Caco-2 (cell line): ENCODE measurements at regions of chr6 and their contacts with region 1.

Region 1: DNA sequence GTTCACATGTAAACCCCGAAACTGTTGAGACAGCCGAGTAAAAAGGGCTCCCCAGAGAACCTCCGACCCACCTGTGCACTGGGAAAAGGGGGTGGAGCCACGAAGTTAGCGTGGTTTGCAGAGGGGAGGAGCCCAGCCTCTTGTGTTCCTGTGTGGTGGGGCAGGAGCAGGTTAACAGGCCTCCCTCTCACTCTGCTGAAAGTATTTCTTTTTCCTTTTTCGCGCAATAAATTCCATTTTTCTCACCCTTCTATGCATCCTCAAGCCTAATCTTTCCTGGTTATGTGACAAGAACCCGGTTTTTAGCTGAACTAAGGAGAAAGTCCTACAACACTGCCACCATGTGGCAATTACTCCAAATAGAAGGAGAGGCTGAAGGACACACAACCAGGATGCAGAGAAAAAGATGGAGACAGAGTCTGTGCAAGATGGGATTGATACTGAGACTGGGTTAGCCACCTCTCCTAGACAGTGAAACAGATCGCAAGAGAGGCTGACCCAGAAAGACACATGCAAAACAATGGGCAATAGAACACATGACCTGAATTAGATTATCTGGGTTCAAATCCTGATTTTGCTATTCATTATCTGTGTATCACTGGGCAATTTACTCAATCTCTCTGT is 168.7 kb upstream of the PRSS16 start:
- DNase-seq: peak; percentile 60 to 69
- H3K4me3 ChIP-seq: peak overlapping the region; percentile 50
- H3K4me3 Mint-ChIP-seq: peak overlapping the region; percentile 77
- H3K27ac Mint-ChIP-seq: no peak overlapping the region
- H3K4me1 ChIP-seq: peaks cover 16% of the 10 kb centered on the region
- H3K4me1 Mint-ChIP-seq: peaks cover 30% of the 10 kb centered on the region
- H3K27me3 ChIP-seq: no peaks in the 10 kb centered on the region
- H3K27me3 Mint-ChIP-seq: no peaks in the 10 kb centered on the region
- CTCF ChIP-seq: peak; percentile 67 to 82

Region 2: GRCh38 chr6:26607434-26608230 is 471.2 kb before region 1 on chr6:
- CTCF ChIA-PET with region 1: no interaction called
- POLR2A ChIA-PET with region 1: no interaction called
- intact Hi-C with region 1: loop called (anchors 1 kb)
- DNase-seq: peak; percentile 55 to 71
- H3K4me3 ChIP-seq: no peak overlapping the region
- H3K4me3 Mint-ChIP-seq: no peak overlapping the region
- H3K27ac Mint-ChIP-seq: no peak overlapping the region
- H3K4me1 ChIP-seq: no peaks in the 10 kb centered on the region
- H3K4me1 Mint-ChIP-seq: no peaks in the 10 kb centered on the region
- H3K27me3 ChIP-seq: no peaks in the 10 kb centered on the region
- H3K27me3 Mint-ChIP-seq: no peaks in the 10 kb centered on the region
- CTCF ChIP-seq: peak; percentile 71 to 86

Region 3: DNA sequence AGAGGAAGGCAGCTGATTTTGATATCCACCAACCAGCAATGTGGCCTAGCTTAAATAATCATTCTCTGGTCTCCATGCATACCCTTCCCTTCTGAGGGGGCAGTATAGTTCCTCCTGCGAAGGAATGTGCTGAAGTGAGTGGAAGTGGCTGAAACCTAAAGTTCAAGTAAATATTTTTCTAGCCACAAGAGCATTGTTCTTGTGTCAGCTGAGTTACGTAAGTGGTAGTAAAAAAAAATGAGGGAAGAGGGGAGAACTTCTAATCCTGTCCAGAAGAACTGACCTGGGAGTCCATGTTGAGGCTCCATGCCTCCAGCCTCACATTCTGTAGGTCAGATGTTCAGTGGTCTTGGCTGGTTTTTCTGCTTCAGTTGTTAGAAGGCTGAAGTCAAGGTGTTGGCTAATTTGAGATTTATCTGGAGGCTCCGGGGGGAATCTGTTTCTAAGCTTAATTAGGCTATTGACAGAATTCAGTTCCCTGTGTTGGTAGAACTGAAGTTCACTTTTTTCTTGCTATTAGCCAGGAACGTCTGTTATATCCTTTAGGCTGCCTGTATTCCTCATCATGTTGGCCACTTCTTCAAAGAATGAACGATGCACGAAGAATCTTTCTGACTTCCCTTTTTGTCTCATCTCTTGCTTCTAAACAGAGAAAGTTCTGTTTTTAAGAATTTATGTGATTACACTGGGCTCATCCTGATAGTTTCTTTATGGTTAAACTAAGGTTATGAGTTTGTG is 38.4 kb before region 1 on chr6:
- CTCF ChIA-PET with region 1: no interaction called
- POLR2A ChIA-PET with region 1: no interaction called
- intact Hi-C with region 1: loop called (anchors 5 kb)
- DNase-seq: peak in 1 of 2 experiments; percentile 43
- H3K4me3 ChIP-seq: no peak overlapping the region
- H3K4me3 Mint-ChIP-seq: peak overlapping the region; percentile 39
- H3K27ac Mint-ChIP-seq: peak overlapping the region; percentile 16
- H3K4me1 ChIP-seq: peaks cover 10% of the 10 kb centered on the region; the same call in 1 of the 2 replicates
- H3K4me1 Mint-ChIP-seq: peaks cover 7% of the 10 kb centered on the region
- H3K27me3 ChIP-seq: no peaks in the 10 kb centered on the region
- H3K27me3 Mint-ChIP-seq: no peaks in the 10 kb centered on the region
- CTCF ChIP-seq: peak in 1 of 2 experiments; percentile 16

Region 4: GRCh38 chr6:27066802-27067201 is 12.0 kb before region 1 on chr6:
- CTCF ChIA-PET with region 1: no interaction called
- POLR2A ChIA-PET with region 1: no interaction called
- intact Hi-C with region 1: no loop called
- DNase-seq: no peak
- H3K4me3 ChIP-seq: no peak overlapping the region
- H3K4me3 Mint-ChIP-seq: no peak overlapping the region
- H3K27ac Mint-ChIP-seq: no peak overlapping the region
- H3K4me1 ChIP-seq: no peaks in the 10 kb centered on the region
- H3K4me1 Mint-ChIP-seq: peaks cover 7% of the 10 kb centered on the region
- H3K27me3 ChIP-seq: no peaks in the 10 kb centered on the region
- H3K27me3 Mint-ChIP-seq: no peaks in the 10 kb centered on the region
- CTCF ChIP-seq: no peak

Region 5: GRCh38 chr6:27140999-27141528 is 62.2 kb after region 1 on chr6:
- CTCF ChIA-PET with region 1: no interaction called
- POLR2A ChIA-PET with region 1: no interaction called
- intact Hi-C with region 1: no loop called
- DNase-seq: no peak
- H3K4me3 ChIP-seq: no peak overlapping the region
- H3K4me3 Mint-ChIP-seq: no peak overlapping the region
- H3K27ac Mint-ChIP-seq: no peak overlapping the region
- H3K4me1 ChIP-seq: peaks cover 31% of the 10 kb centered on the region
- H3K4me1 Mint-ChIP-seq: peaks cover 9% of the 10 kb centered on the region
- H3K27me3 ChIP-seq: no peaks in the 10 kb centered on the region
- H3K27me3 Mint-ChIP-seq: no peaks in the 10 kb centered on the region
- CTCF ChIP-seq: no peak

Region 6: DNA sequence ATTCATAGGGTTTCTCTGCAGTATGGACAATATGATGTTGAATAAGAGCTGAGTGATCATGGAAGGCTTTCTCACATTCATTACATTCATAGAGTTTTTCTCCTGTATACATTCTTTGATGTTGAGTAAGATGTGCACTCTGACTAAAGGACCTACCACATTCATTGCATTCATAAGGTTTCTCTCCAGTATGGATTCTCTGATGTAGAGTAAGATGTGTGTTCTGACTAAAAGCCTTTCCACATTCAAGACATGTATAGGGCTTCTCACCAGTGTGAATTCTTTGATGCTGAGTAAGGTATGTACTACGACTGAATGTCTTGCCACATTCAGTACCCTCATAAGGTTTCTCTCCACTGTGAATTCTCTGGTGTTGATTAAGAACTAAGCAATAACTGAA is 280.4 kb after region 1 on chr6:
- CTCF ChIA-PET with region 1: no interaction called
- POLR2A ChIA-PET with region 1: no interaction called
- intact Hi-C with region 1: no loop called
- DNase-seq: no peak
- H3K4me3 ChIP-seq: no peak overlapping the region
- H3K4me3 Mint-ChIP-seq: no peak overlapping the region
- H3K27ac Mint-ChIP-seq: no peak overlapping the region
- H3K4me1 ChIP-seq: no peaks in the 10 kb centered on the region
- H3K4me1 Mint-ChIP-seq: no peaks in the 10 kb centered on the region
- H3K27me3 ChIP-seq: no peaks in the 10 kb centered on the region
- H3K27me3 Mint-ChIP-seq: no peaks in the 10 kb centered on the region
- CTCF ChIP-seq: no peak